ENCODE measurements at regions of chr11 and their contacts with region 1.

Region 1: GRCh38 chr11:76152086-76152681 is 54.1 kb downstream of the WNT11 start:
- DNase-seq: peak; percentile 64 to 73 (median 67)
- H3K4me3 ChIP-seq: peak overlapping the region in 1 of 2 donors; percentile 2
- H3K4me3 Mint-ChIP-seq: peak overlapping the region; percentile 71 to 86 (median 80)
- H3K27ac ChIP-seq: no peak overlapping the region
- H3K27ac Mint-ChIP-seq: peak overlapping the region in 4 of 7 donors; percentile 4 to 87 (median 49)
- H3K4me1 ChIP-seq: peaks cover 22% of the 10 kb centered on the region
- H3K4me1 Mint-ChIP-seq: peaks cover 16 to 28% (median 22%) of the 10 kb centered on the region in 4 donors
- H3K27me3 ChIP-seq: no peaks in the 10 kb centered on the region
- H3K27me3 Mint-ChIP-seq: peaks cover 0 to 2% of the 10 kb centered on the region in 2 donors

Region 2: GRCh38 chr11:75802913-75803820 is 349.0 kb before region 1 on chr11:
- CTCF ChIA-PET with region 1: interaction called, 14 read pairs
- POLR2A ChIA-PET with region 1: no interaction called
- intact Hi-C with region 1: loop called (anchors 5 kb)
- DNase-seq: peak; percentile 59 to 68 (median 61)
- H3K4me3 ChIP-seq: no peak overlapping the region
- H3K4me3 Mint-ChIP-seq: no peak overlapping the region
- H3K27ac ChIP-seq: no peak overlapping the region
- H3K27ac Mint-ChIP-seq: peak overlapping the region in 2 of 7 donors; percentile 23 to 44
- H3K4me1 ChIP-seq: peaks cover 20% of the 10 kb centered on the region
- H3K4me1 Mint-ChIP-seq: peaks cover 9 to 35% (median 20%) of the 10 kb centered on the region in 4 donors
- H3K27me3 ChIP-seq: no peaks in the 10 kb centered on the region
- H3K27me3 Mint-ChIP-seq: no peaks in the 10 kb centered on the region

Region 3: DNA sequence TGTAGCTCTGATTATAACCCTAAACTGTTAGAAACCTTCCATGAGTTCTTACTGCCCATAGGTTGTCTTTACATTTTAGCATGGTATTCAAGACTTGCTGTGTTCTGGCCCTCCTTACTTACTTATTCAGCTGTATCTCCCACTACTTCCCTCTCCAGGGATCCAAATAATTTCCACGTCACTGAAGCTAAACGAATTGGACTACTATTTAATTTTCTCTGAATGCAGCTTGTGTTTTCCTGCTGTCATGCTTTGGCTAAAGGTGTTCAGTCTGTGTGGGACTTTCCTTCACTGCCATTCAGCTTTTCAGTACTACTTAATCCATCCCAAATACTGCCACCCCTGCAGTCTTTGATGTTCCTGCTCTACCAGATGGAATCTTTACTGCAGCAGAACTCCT is 248.9 kb before region 1 on chr11:
- CTCF ChIA-PET with region 1: interaction called, 105 read pairs
- POLR2A ChIA-PET with region 1: no interaction called
- intact Hi-C with region 1: no loop called
- DNase-seq: no peak
- H3K4me3 ChIP-seq: no peak overlapping the region
- H3K4me3 Mint-ChIP-seq: no peak overlapping the region
- H3K27ac ChIP-seq: no peak overlapping the region
- H3K27ac Mint-ChIP-seq: no peak overlapping the region
- H3K4me1 ChIP-seq: no peaks in the 10 kb centered on the region
- H3K4me1 Mint-ChIP-seq: peaks cover 3 to 14% (median 10%) of the 10 kb centered on the region in 4 donors
- H3K27me3 ChIP-seq: no peaks in the 10 kb centered on the region
- H3K27me3 Mint-ChIP-seq: no peaks in the 10 kb centered on the region

Region 4: GRCh38 chr11:76135491-76135890 is 16.7 kb before region 1 on chr11:
- CTCF ChIA-PET with region 1: interaction called, 24 read pairs
- POLR2A ChIA-PET with region 1: interaction called, 4 read pairs
- intact Hi-C with region 1: no loop called
- DNase-seq: no peak
- H3K4me3 ChIP-seq: no peak overlapping the region
- H3K4me3 Mint-ChIP-seq: no peak overlapping the region
- H3K27ac ChIP-seq: no peak overlapping the region
- H3K27ac Mint-ChIP-seq: no peak overlapping the region
- H3K4me1 ChIP-seq: peaks cover 20% of the 10 kb centered on the region
- H3K4me1 Mint-ChIP-seq: peaks cover 15 to 21% (median 18%) of the 10 kb centered on the region in 4 donors
- H3K27me3 ChIP-seq: no peaks in the 10 kb centered on the region
- H3K27me3 Mint-ChIP-seq: no peaks in the 10 kb centered on the region

Measured in CD4-positive, alpha-beta memory T cell (primary cell).